Activated T-helper 1 cell treated with anti-CD3 and anti-CD28 coated beads, Interleukin-12 subunit alpha, Interleukin-12 subunit beta, Interleukin-2, Interleukin-4 antibody, amounts not matched to agents 30 ng/mL and 10 ng/mL and 1 ng/mL, durations not matched to agents 14 hours and 24 hours and 36 hours (primary cell): ENCODE measurements at regions of chr3 and their contacts with region 1.

Region 1: DNA sequence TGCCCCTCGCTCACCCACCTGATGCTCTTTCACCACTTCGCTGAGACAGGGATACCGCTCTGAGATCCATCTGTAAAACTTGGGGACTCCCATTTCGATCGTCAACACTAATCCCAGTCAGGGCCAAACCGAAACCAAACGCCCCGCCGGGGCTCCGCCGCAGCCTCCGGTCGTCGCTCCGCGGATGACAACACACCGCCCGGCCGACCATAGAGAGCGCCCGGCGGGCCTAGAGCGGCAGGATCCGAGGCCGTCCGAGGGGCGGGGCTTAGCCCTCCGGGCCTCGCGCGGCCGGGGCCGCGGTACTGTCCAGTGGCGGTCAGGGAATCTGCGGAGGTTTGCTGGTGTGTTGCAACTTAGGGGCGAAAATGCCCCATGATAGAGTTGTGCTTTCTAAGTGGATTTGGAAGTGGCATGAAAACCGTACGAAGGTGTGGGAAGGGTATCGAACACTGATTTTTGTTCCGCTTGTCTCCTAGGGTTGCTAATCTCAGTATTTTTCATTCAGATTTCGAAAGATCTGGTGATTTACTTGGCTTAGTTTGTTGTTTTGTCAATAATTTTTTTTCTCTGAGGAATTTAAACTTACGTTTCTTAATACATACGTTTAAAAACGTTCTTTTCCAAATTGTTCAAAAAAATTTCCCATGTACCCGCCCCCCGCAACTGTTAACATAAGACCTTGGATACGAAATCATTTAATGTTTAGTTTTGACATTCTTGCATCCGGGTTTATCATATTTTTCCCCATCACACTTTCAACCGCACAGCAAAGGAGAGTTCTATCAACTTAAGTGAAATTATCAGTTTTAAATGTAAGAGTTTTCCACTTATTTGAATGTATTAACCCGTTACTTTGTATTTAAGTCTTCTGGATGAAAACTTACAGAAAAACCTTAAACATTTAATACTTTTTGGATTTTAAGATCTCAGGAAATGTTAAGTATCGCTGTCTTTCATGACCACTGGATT is at the start of gene XRN1:
- DNase-seq: peak; percentile 94
- H3K4me3 Mint-ChIP-seq: peak within 1 kb of the TSS; percentile 99
- H3K27ac Mint-ChIP-seq: peak within 1 kb of the TSS; percentile 99
- H3K4me1 Mint-ChIP-seq: peaks cover 44% of the 10 kb centered on the region
- H3K27me3 Mint-ChIP-seq: no peaks in the 10 kb centered on the region
- total RNA-seq, gene XRN1: 48.0 and 52.7 TPM in 2 replicates

Region 2: GRCh38 chr3:141553055-141553454 is 895.1 kb before region 1 on chr3:
- intact Hi-C with region 1: loop called (anchors 2 kb)
- DNase-seq: peak; percentile 35
- H3K4me3 Mint-ChIP-seq: peak overlapping the region; percentile 38
- H3K27ac Mint-ChIP-seq: peak overlapping the region; percentile 93
- H3K4me1 Mint-ChIP-seq: peaks cover 52% of the 10 kb centered on the region
- H3K27me3 Mint-ChIP-seq: no peaks in the 10 kb centered on the region

Region 3: GRCh38 chr3:142028243-142028777 is 419.8 kb before region 1 on chr3:
- intact Hi-C with region 1: loop called (anchors 2 kb)
- DNase-seq: peak; percentile 22
- H3K4me3 Mint-ChIP-seq: peak overlapping the region; percentile 87
- H3K27ac Mint-ChIP-seq: peak overlapping the region; percentile 49
- H3K4me1 Mint-ChIP-seq: peaks cover 18% of the 10 kb centered on the region
- H3K27me3 Mint-ChIP-seq: no peaks in the 10 kb centered on the region

Region 4: GRCh38 chr3:142467768-142468167 is 19.6 kb after region 1 on chr3:
- intact Hi-C with region 1: no loop called
- DNase-seq: no peak
- H3K4me3 Mint-ChIP-seq: no peak overlapping the region
- H3K27ac Mint-ChIP-seq: no peak overlapping the region
- H3K4me1 Mint-ChIP-seq: no peaks in the 10 kb centered on the region
- H3K27me3 Mint-ChIP-seq: no peaks in the 10 kb centered on the region

Region 5: GRCh38 chr3:142498397-142499180 is 50.5 kb after region 1 on chr3:
- intact Hi-C with region 1: loop called (anchors 1 kb)
- DNase-seq: no peak
- H3K4me3 Mint-ChIP-seq: no peak overlapping the region
- H3K27ac Mint-ChIP-seq: peak overlapping the region; percentile 19
- H3K4me1 Mint-ChIP-seq: peaks cover 22% of the 10 kb centered on the region
- H3K27me3 Mint-ChIP-seq: no peaks in the 10 kb centered on the region

Region 6: DNA sequence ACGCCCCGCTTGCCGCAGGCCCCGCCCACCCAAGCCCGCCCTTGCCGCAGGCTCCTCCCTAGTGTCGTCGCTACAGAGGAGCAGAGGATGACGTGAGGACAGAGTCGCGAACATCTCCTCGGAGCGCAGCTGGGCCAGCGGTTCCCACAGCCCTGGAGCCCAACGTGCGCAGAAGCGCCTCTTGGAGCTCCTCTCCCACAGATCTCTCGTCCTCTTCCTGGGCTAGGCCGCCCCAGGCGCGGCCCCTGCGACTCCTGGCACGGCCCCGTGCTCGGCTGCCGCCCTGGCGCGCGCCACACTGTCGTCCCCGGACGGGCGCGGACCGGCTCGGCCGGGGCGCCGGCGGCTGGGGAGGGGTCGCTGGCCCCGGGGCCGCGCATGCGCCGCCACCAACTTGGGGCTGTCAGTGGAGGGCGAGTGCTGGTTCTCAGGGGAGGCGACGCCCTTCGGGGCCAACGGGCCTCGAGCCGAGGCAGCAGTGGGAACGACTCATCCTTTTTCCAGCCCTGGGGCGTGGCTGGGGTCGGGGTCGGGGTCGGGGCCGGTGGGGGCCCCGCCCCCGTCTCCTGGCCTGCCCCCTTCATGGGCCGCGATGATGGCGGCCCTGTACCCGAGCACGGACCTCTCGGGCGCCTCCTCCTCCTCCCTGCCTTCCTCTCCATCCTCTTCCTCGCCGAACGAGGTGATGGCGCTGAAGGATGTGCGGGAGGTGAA is 276.0 kb after region 1 on chr3 and contains the start of gene TRPC1:
- intact Hi-C with region 1: loop called (anchors 5 kb)
- DNase-seq: peak; percentile 73
- H3K4me3 Mint-ChIP-seq: peak within 1 kb of the TSS; percentile 86
- H3K27ac Mint-ChIP-seq: peak within 1 kb of the TSS; percentile 83
- H3K4me1 Mint-ChIP-seq: peaks cover 4% of the 10 kb centered on the region
- H3K27me3 Mint-ChIP-seq: peaks cover 50% of the 10 kb centered on the region
- total RNA-seq, gene TRPC1: 0.66 and 1.1 TPM in 2 replicates